Activated CD4-positive, alpha-beta T cell treated with anti-CD3 and anti-CD28 coated beads, Interleukin-2, amount 10 ng/mL, durations not matched to agents 24 days and 14 days (primary cell): ENCODE measurements at regions of chr10 and their contacts with region 1.

Region 1: GRCh38 chr10:132654702-132655661 is 117.4 kb downstream of the INPP5A start:
- DNase-seq: peak; percentile 84
- H3K4me3 Mint-ChIP-seq: no peak overlapping the region
- H3K27ac Mint-ChIP-seq: no peak overlapping the region
- H3K4me1 Mint-ChIP-seq: no peaks in the 10 kb centered on the region
- H3K27me3 Mint-ChIP-seq: no peaks in the 10 kb centered on the region

Region 2: DNA sequence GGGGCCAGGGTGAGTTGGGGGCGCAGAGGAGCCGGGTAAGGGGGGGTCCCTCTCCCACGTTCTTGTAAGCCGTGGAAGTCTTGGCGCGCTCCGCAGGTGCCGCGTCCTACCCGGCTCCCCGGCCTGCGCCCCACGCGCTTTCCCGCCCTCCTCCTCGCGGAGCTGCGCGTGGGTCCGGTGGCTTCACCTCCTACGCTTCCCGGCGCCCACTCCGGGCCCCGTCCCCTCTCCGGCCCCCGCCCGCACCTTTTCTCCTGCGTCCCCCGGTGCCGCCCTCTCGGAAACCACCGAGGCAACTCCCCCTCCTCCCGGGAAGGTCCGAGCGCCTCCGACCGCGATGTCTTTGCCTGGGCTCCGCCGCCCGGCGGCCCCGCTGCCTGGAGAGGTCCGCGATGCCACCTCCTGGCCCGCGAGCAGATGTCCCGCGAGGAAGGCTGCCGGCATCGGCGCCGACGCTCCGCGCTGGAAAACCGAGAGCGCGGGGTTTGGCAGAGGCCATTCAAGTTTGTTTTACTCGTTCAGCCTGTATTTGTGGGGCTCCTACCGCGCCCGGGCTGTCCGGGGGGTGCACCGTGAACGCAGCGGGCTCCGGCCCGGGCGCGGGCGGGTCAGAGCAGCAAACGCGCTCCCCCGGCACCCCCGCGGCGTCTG is 133.3 kb after region 1 on chr10:
- intact Hi-C with region 1: loop called (anchors 10 kb)
- DNase-seq: no peak
- H3K4me3 Mint-ChIP-seq: no peak overlapping the region
- H3K27ac Mint-ChIP-seq: no peak overlapping the region
- H3K4me1 Mint-ChIP-seq: no peaks in the 10 kb centered on the region
- H3K27me3 Mint-ChIP-seq: peaks cover 17% of the 10 kb centered on the region

Region 3: DNA sequence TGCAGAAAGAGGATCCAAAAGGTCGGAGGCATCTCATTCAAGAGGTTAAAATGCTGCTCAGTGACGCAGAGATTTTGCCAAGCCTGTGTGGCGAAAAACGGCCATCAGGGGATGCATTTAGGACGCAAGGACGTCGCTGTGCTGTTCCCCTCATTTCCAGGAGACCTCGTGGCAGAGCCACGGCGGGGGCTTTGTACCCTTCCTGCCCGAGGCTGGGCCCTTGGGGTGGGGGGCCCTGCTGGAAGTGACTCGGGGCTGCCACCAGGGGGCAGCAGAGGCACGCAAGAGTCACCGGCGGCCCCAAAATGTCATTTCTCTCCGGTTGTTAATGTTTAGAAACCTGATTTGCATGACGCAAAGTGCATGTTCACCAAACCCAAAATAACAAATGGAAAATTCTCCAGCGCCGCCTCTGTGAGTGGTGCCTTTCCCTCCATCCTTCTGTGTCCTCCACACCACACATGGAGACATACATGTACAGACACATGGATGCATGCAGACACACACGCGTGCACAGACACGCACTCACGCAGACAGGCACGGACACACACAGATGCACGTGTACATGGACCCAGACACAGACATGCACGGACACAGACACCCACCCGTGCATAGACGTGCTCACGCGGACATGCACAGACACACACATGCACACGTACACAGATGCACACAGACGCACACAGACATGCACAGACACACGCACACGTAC is 182.0 kb after region 1 on chr10:
- intact Hi-C with region 1: loop called (anchors 10 kb)
- DNase-seq: peak; percentile 79
- H3K4me3 Mint-ChIP-seq: no peak overlapping the region
- H3K27ac Mint-ChIP-seq: no peak overlapping the region
- H3K4me1 Mint-ChIP-seq: no peaks in the 10 kb centered on the region
- H3K27me3 Mint-ChIP-seq: no peaks in the 10 kb centered on the region

Region 4: GRCh38 chr10:132862485-132863420 is 207.8 kb after region 1 on chr10:
- intact Hi-C with region 1: no loop called
- DNase-seq: peak; percentile 63
- H3K4me3 Mint-ChIP-seq: no peak overlapping the region
- H3K27ac Mint-ChIP-seq: no peak overlapping the region
- H3K4me1 Mint-ChIP-seq: peaks cover 1% of the 10 kb centered on the region
- H3K27me3 Mint-ChIP-seq: no peaks in the 10 kb centered on the region